ENCODE measurements at regions of chr13 and their contacts with region 1.

Region 1: GRCh38 chr13:30371649-30372265 is 50.5 kb upstream of the UBE2L5 start:
- DNase-seq: peak; percentile 22 to 92 (median 89)
- ATAC-seq: peak; percentile 78
- H3K4me3 ChIP-seq: peak overlapping the region; percentile 37
- H3K4me3 Mint-ChIP-seq: peak overlapping the region; percentile 51 to 91 (median 76)
- H3K27ac ChIP-seq: peak overlapping the region; percentile 58
- H3K27ac Mint-ChIP-seq: peak overlapping the region; percentile 90 to 98 (median 95)
- H3K4me1 ChIP-seq: peaks cover 73% of the 10 kb centered on the region in 2 donors
- H3K4me1 Mint-ChIP-seq: peaks cover 68 to 87% (median 78%) of the 10 kb centered on the region in 7 donors
- H3K27me3 ChIP-seq: no peaks in the 10 kb centered on the region
- H3K27me3 Mint-ChIP-seq: no peaks in the 10 kb centered on the region

Region 2: GRCh38 chr13:29850224-29850898 is 521.4 kb before region 1 on chr13 and contains the start of gene UBL3:
- CTCF ChIA-PET with region 1: no interaction called
- POLR2A ChIA-PET with region 1: interaction called, 6 read pairs
- intact Hi-C with region 1: loop called in 1 of 2 experiments (anchors 5 kb)
- DNase-seq: peak; percentile 88 to 95 (median 92)
- ATAC-seq: peak; percentile 97
- H3K4me3 ChIP-seq: peak within 1 kb of the TSS; percentile 78
- H3K4me3 Mint-ChIP-seq: peak within 1 kb of the TSS; percentile 91 to 99 (median 96)
- H3K27ac ChIP-seq: peak within 1 kb of the TSS; percentile 98
- H3K27ac Mint-ChIP-seq: peak within 1 kb of the TSS; percentile 91 to 100 (median 99)
- H3K4me1 ChIP-seq: peaks cover 5 to 13% of the 10 kb centered on the region in 2 donors
- H3K4me1 Mint-ChIP-seq: peaks cover 10 to 42% (median 24%) of the 10 kb centered on the region in 7 donors
- H3K27me3 ChIP-seq: no peaks in the 10 kb centered on the region
- H3K27me3 Mint-ChIP-seq: no peaks in the 10 kb centered on the region
- total RNA-seq, gene UBL3: 12.7 to 34.5 (median 28.9) TPM

Region 3: GRCh38 chr13:30334663-30335386 is 36.9 kb before region 1 on chr13:
- CTCF ChIA-PET with region 1: interaction called, 3 read pairs
- POLR2A ChIA-PET with region 1: interaction called, 3 read pairs
- intact Hi-C with region 1: loop called in 1 of 2 experiments (anchors 5 kb)
- DNase-seq: peak in 5 of 9 donors; percentile 24 to 43 (median 37)
- ATAC-seq: peak; percentile 57
- H3K4me3 ChIP-seq: no peak overlapping the region
- H3K4me3 Mint-ChIP-seq: no peak overlapping the region
- H3K27ac ChIP-seq: no peak overlapping the region
- H3K27ac Mint-ChIP-seq: peak overlapping the region in 2 of 9 donors; percentile 8 to 9
- H3K4me1 ChIP-seq: peaks cover 0 to 8% of the 10 kb centered on the region in 2 donors
- H3K4me1 Mint-ChIP-seq: peaks cover 7 to 40% (median 19%) of the 10 kb centered on the region in 7 donors
- H3K27me3 ChIP-seq: no peaks in the 10 kb centered on the region
- H3K27me3 Mint-ChIP-seq: no peaks in the 10 kb centered on the region

Region 4: DNA sequence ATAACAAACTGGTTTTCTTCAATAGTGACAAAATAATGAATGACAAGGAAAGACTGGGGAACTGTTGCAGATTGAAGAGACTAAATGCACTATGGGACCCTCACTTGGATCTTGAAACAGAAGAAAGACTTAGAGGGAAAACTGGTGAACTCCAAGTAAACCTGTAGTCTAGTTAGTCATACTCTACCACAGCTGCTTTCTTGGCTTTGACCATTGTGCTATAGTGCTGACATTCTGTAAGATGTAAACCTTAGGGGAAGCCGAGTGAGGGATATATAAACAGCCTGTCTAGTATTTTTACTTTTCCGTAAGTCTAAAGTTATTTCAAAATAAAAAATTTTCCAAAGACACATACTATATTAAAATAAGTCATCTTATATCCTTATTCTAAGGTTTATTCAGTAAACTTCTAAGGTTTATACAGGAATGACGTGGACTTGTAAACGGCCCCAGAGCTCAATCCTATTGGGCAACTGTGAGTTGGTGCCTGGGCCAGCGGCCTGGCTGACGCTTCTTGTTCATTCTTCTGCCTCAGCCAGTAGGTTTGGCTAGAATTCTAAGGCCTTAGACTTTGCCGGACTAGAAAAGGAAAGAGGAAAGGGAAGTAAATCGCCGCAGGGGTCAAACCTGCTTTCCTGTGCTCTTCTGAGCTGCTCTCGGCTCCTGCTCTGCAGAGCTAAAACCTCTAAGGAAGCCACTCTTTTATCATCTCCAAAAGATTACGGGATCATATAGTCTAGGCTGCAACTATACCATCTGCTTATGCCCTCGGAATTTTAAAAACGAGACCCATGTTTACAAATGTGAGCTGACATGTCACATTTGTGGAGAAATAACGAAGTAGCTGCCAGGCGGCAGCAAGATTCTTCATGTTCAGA is 16.9 kb after region 1 on chr13:
- CTCF ChIA-PET with region 1: interaction called, 56 read pairs
- POLR2A ChIA-PET with region 1: interaction called, 281 read pairs
- intact Hi-C with region 1: loop called (anchors 1 kb)
- DNase-seq: no peak
- ATAC-seq: peak; percentile 13
- H3K4me3 ChIP-seq: peak overlapping the region; percentile 41
- H3K4me3 Mint-ChIP-seq: peak overlapping the region; percentile 67 to 93 (median 78)
- H3K27ac ChIP-seq: peak overlapping the region; percentile 51
- H3K27ac Mint-ChIP-seq: peak overlapping the region; percentile 68 to 95 (median 90)
- H3K4me1 ChIP-seq: peaks cover 6 to 40% of the 10 kb centered on the region in 2 donors
- H3K4me1 Mint-ChIP-seq: peaks cover 26 to 68% (median 57%) of the 10 kb centered on the region in 7 donors
- H3K27me3 ChIP-seq: no peaks in the 10 kb centered on the region
- H3K27me3 Mint-ChIP-seq: no peaks in the 10 kb centered on the region

Region 5: GRCh38 chr13:30551189-30551588 is 179.4 kb after region 1 on chr13:
- CTCF ChIA-PET with region 1: interaction called, 3 read pairs
- POLR2A ChIA-PET with region 1: no interaction called
- intact Hi-C with region 1: loop called in 1 of 2 experiments (anchors 1 kb)
- DNase-seq: peak in 7 of 9 donors; percentile 22 to 63 (median 44)
- ATAC-seq: peak; percentile 82
- H3K4me3 ChIP-seq: no peak overlapping the region
- H3K4me3 Mint-ChIP-seq: no peak overlapping the region
- H3K27ac ChIP-seq: no peak overlapping the region
- H3K27ac Mint-ChIP-seq: peak overlapping the region in 1 of 9 donors; percentile 26
- H3K4me1 ChIP-seq: no peaks in the 10 kb centered on the region
- H3K4me1 Mint-ChIP-seq: peaks cover 0 to 6% (median 2%) of the 10 kb centered on the region in 7 donors
- H3K27me3 ChIP-seq: no peaks in the 10 kb centered on the region
- H3K27me3 Mint-ChIP-seq: peaks cover 0 to 11% (median 0%) of the 10 kb centered on the region in 5 donors

Region 6: DNA sequence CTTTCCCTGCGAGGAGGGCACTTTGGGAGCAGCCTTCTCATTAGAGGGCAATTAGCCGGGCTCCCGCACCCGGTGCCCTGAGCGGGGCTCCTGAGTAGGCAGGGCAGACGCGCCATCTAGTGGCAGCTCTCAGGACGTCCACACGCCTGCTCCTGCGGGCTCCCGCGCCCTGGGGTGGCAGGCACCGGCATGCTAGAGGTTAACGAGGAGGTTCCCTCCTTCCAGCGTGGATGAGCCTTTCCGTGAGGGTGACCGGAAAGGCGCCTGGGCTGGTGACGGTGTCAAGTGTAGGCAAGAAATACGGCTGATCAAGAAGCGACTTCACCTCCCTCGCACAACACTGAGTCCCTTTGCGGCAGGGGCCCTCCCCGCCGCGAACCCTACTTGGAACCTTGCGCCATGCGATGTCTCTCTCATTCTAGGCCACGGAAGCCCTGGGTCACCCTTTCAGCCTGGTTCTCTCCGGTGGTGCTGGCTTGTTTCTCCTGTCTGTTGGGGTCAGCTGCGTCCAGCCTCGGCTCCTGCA is 431.3 kb after region 1 on chr13:
- CTCF ChIA-PET with region 1: no interaction called
- POLR2A ChIA-PET with region 1: no interaction called
- intact Hi-C with region 1: loop called in 1 of 2 experiments (anchors 1 kb)
- DNase-seq: peak; percentile 54 to 83 (median 70)
- ATAC-seq: peak; percentile 97
- H3K4me3 ChIP-seq: peak overlapping the region; percentile 27
- H3K4me3 Mint-ChIP-seq: peak overlapping the region; percentile 17 to 75 (median 51)
- H3K27ac ChIP-seq: no peak overlapping the region
- H3K27ac Mint-ChIP-seq: peak overlapping the region in 1 of 9 donors; percentile 12
- H3K4me1 ChIP-seq: peaks cover 3 to 7% of the 10 kb centered on the region in 2 donors
- H3K4me1 Mint-ChIP-seq: peaks cover 5 to 19% (median 10%) of the 10 kb centered on the region in 7 donors
- H3K27me3 ChIP-seq: no peaks in the 10 kb centered on the region
- H3K27me3 Mint-ChIP-seq: peaks cover 0 to 5% (median 0%) of the 10 kb centered on the region in 5 donors

Region 7: DNA sequence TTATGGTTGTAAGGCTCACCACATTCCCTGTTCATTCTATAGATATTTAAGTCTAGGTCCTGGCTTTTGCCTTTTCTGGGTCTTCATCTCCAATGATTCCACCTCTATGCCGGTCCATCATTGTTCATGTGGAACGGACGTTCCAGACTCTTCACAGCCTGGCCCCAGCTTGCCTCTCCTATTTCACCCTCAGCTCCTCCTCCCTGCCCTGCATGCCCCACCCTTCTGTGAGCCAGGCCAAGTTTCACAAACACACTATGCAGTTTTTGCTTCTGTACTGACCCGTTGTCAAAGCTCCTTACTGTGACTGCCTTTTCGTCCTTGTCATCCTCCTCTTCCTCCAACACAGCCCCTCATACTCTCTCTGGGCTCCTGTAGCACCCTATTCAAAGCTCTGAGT is 592.0 kb after region 1 on chr13:
- CTCF ChIA-PET with region 1: no interaction called
- POLR2A ChIA-PET with region 1: no interaction called
- intact Hi-C with region 1: no loop called
- DNase-seq: no peak
- ATAC-seq: no peak
- H3K4me3 ChIP-seq: no peak overlapping the region
- H3K4me3 Mint-ChIP-seq: no peak overlapping the region
- H3K27ac ChIP-seq: no peak overlapping the region
- H3K27ac Mint-ChIP-seq: no peak overlapping the region
- H3K4me1 ChIP-seq: no peaks in the 10 kb centered on the region
- H3K4me1 Mint-ChIP-seq: no peaks in the 10 kb centered on the region
- H3K27me3 ChIP-seq: no peaks in the 10 kb centered on the region
- H3K27me3 Mint-ChIP-seq: peaks cover 41 to 67% (median 46%) of the 10 kb centered on the region in 5 donors

Region 8: DNA sequence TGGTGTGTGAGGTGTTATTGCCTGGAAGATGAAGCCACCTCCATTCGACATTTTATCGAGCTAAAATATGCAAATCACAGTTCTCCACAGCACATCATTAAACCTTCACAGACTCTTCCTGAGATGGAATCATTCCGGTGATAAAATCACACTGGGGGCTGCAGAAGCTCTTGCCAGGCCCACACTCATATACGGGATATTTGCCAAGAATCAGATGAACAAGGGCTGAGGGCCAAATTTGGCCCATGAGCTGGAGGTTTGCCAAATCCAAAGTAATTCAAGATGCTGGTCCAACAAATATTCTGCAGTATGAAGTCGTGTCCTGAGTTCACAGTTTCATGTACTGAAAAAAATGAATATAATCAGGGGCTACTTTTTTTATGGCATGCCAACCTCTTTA is 1350.9 kb after region 1 on chr13:
- CTCF ChIA-PET with region 1: no interaction called
- POLR2A ChIA-PET with region 1: no interaction called
- intact Hi-C with region 1: no loop called
- DNase-seq: no peak
- ATAC-seq: no peak
- H3K4me3 ChIP-seq: no peak overlapping the region
- H3K4me3 Mint-ChIP-seq: no peak overlapping the region
- H3K27ac ChIP-seq: no peak overlapping the region
- H3K27ac Mint-ChIP-seq: no peak overlapping the region
- H3K4me1 ChIP-seq: no peaks in the 10 kb centered on the region
- H3K4me1 Mint-ChIP-seq: no peaks in the 10 kb centered on the region
- H3K27me3 ChIP-seq: no peaks in the 10 kb centered on the region
- H3K27me3 Mint-ChIP-seq: peaks cover 0 to 43% (median 32%) of the 10 kb centered on the region in 5 donors

Measured in naive thymus-derived CD4-positive, alpha-beta T cell (primary cell).